Caco-2 (cell line): ENCODE measurements at regions of chr2 and their contacts with region 1.

Region 1: GRCh38 chr2:62505750-62506420 is at the start of gene TMEM17:
- DNase-seq: peak; percentile 95 to 98
- H3K4me3 ChIP-seq: peak within 1 kb of the TSS; percentile 51
- H3K4me3 Mint-ChIP-seq: peak within 1 kb of the TSS; percentile 83
- H3K27ac Mint-ChIP-seq: peak within 1 kb of the TSS; percentile 87
- H3K4me1 ChIP-seq: no peaks in the 10 kb centered on the region
- H3K4me1 Mint-ChIP-seq: peaks cover 15% of the 10 kb centered on the region
- H3K27me3 ChIP-seq: no peaks in the 10 kb centered on the region
- H3K27me3 Mint-ChIP-seq: no peaks in the 10 kb centered on the region
- CTCF ChIP-seq: no peak
- total RNA-seq, gene TMEM17: 2.6 and 3.3 TPM in 2 replicates

Region 2: DNA sequence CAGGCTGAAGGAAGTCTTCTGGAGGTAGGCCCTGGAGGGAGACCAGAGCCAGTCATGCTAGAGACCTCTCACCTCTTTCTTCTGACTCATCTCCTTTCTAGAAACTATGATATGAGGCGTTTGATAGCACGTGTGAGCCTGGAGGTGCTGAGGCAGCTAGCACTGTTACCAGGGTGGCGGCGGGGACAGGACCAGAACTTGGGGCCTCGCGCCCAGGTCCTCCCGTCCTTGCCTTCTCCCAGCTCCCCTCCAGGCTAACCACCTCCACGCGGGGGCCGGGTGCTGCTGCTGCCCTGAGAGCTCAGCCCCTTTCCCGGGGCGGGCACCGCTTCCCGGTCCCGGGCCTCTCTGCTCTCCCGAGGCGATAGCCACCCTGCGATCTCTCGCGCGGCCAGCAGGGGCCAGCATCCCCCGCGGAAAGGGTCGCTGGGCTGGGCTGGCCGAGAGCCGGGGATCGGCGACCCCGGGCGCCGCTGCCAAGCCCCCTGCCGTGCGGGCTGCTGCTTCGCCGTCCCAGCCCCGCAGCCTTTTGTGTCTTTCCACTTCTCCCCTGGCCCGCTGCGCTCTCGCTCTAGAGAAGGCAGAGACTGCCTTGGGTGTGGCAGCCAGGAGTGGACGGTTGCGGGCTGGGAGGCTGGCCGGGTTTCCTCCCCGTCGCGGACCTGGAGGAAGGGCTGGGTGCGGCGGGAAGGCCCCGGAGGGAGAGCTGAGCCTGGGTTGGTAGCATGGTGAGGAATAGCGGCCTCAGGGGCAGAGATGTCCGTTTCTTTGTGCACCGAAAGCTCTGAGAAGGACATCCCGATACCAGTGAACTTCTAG is 49.0 kb before region 1 on chr2:
- CTCF ChIA-PET with region 1: interaction called, 4 read pairs
- POLR2A ChIA-PET with region 1: no interaction called
- intact Hi-C with region 1: loop called (anchors 1 kb)
- DNase-seq: peak; percentile 82 to 95
- H3K4me3 ChIP-seq: peak overlapping the region; percentile 68
- H3K4me3 Mint-ChIP-seq: peak overlapping the region; percentile 75
- H3K27ac Mint-ChIP-seq: peak overlapping the region; percentile 66
- H3K4me1 ChIP-seq: peaks cover 38% of the 10 kb centered on the region
- H3K4me1 Mint-ChIP-seq: peaks cover 8% of the 10 kb centered on the region
- H3K27me3 ChIP-seq: no peaks in the 10 kb centered on the region
- H3K27me3 Mint-ChIP-seq: no peaks in the 10 kb centered on the region
- CTCF ChIP-seq: peak; percentile 92 to 98

Region 3: DNA sequence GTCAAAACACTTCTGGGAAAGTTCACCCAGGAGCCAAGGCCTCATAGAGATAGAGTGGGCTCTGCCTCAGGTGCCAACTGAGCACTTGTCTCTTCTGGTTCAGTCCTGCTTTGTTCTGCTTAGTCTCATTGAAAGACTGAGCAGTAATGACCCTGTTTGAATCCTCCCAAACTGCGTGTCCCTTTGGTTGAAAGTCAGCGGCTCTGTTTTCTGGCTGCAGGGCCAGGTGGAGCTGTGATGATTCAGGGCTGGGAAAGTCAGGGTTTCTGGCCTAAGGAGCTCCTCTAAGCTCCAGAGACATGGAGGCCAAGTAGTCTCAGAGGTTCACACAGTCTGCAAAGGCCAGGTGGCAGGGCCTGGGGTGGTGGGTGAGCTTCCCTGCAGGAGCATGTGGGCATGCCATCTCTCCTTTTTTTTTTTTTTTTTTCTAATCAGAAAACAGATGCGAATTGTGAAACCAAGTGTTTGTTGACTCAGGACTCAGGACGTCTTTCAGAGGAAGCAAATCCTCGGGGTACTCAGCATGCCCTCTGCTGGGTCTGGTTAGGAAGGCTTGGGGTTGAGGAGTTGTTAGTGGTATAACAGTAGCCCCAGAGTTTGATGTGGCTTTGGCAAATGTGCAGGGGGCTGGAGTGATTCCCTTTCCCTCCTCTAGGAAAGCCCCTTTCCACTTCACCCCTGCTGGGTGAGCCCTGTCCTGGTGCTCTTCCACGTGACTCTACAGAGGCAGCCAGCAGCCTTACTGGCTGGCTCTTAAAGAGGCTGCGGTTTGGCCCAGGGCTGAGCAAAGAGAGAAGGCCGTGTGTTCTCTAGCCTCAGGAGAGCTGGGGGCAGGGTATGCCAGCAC is 38.2 kb before region 1 on chr2:
- CTCF ChIA-PET with region 1: no interaction called
- POLR2A ChIA-PET with region 1: no interaction called
- intact Hi-C with region 1: no loop called
- DNase-seq: no peak
- H3K4me3 ChIP-seq: no peak overlapping the region
- H3K4me3 Mint-ChIP-seq: no peak overlapping the region
- H3K27ac Mint-ChIP-seq: peak overlapping the region; percentile 54
- H3K4me1 ChIP-seq: peaks cover 10% of the 10 kb centered on the region
- H3K4me1 Mint-ChIP-seq: peaks cover 3% of the 10 kb centered on the region
- H3K27me3 ChIP-seq: no peaks in the 10 kb centered on the region
- H3K27me3 Mint-ChIP-seq: no peaks in the 10 kb centered on the region
- CTCF ChIP-seq: no peak

Region 4: DNA sequence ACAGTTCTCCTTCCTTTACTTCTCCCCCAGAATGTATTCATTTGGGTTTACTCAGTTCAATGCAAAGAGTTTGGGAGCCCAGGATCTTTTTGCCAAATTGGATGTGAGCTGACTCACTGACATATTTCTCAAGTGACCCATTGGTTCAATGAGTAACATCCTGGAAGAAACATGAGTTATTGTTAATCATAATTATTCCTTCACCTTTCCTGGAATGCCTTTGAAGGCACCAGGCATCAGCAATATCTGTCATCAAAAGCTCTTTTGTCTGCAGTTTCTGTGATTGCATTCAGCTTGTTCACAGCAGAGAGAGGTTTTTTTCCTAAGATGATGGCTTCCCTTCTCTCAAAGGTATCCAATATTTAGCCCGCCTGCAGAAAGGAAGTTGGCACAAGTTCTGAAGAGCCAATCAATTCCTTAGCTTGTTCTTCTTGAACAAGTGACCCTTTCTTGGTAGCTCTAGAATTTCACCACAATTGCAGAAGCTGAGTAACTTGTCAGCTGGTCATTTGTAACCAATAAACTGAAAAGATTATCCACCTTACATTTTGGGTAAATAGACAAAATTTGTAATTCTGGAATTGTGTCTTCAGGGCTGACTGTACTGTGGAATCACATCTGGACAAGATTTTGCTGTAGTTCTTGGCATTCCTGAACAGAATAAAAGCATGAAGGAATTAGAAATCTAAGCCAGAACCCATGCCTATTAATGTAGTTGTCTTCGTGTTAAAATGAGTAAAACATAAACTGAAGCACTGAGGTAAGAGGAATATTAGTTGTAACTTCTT is 72.3 kb after region 1 on chr2:
- CTCF ChIA-PET with region 1: no interaction called
- POLR2A ChIA-PET with region 1: no interaction called
- intact Hi-C with region 1: loop called (anchors 1 kb)
- DNase-seq: peak in 1 of 2 experiments; percentile 50
- H3K4me3 ChIP-seq: no peak overlapping the region
- H3K4me3 Mint-ChIP-seq: peak overlapping the region; percentile 36
- H3K27ac Mint-ChIP-seq: peak overlapping the region; percentile 92
- H3K4me1 ChIP-seq: peaks cover 60% of the 10 kb centered on the region
- H3K4me1 Mint-ChIP-seq: peaks cover 54% of the 10 kb centered on the region
- H3K27me3 ChIP-seq: no peaks in the 10 kb centered on the region
- H3K27me3 Mint-ChIP-seq: no peaks in the 10 kb centered on the region
- CTCF ChIP-seq: no peak

Region 5: DNA sequence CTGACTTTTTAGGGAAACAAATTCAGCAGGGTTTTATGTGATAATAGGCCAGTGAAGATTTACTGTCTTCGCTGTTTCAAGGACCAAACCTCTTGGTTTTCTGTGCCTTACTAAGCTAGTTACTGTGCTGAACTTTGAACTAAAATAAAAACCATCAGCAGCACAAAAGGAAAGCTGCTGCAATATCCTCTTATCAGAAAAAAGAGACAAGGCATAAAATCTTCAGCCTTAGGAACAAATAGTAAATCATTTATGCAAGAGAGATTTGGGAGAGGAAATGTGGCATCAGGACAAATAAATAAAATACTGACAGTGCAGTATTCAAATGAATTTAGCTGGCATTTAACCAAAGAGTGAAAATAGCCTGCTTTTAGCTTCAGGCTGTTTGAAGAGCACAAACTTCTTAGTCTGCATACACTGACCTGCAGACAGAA is 135.5 kb after region 1 on chr2:
- CTCF ChIA-PET with region 1: interaction called, 4 read pairs
- POLR2A ChIA-PET with region 1: no interaction called
- intact Hi-C with region 1: loop called (anchors 5 kb)
- DNase-seq: no peak
- H3K4me3 ChIP-seq: no peak overlapping the region
- H3K4me3 Mint-ChIP-seq: peak overlapping the region; percentile 15
- H3K27ac Mint-ChIP-seq: peak overlapping the region; percentile 23
- H3K4me1 ChIP-seq: peaks cover 31% of the 10 kb centered on the region
- H3K4me1 Mint-ChIP-seq: peaks cover 22% of the 10 kb centered on the region
- H3K27me3 ChIP-seq: no peaks in the 10 kb centered on the region
- H3K27me3 Mint-ChIP-seq: no peaks in the 10 kb centered on the region
- CTCF ChIP-seq: no peak

Region 6: DNA sequence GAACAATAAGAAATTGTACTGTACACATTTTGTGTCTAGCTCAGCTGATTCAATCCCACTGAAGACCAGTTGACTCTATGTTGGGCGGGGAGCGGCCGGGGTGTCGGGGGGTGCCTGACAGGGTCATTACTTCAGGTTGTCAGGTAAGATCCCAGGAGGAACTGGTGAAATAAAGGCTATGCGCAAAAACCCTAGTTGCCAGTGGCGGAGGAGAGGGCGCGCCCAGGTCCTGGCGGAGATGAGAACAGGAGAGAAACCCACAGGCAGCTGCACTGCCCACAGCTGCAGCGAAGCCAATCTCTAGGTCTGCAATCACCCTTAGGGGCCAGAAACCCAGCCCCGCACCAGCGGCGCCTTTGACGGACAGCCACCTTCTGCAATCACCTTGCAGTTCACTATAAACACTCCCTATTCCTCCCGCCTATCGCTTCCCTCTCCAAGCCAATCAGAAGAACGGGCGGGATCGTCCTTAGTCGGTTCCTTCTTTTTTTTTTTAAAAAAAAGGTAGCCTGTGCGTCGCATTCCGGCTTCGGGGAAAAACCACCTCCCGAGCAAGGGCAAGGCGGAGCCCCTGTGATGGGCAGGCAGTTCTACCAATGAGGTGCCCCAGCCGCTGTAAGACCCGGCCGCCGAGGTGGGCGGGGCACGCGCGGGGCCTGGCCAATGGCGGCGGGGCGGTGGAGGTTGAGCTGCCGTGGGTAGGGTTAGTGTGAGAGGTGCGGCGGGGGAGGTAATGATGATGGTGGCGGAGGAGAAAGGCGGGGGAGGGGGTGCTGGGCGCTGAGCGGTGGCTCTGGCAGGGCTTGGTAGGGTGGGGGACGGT is 199.3 kb after region 1 on chr2 and contains the start of gene EHBP1:
- CTCF ChIA-PET with region 1: no interaction called
- POLR2A ChIA-PET with region 1: interaction called, 17 read pairs
- intact Hi-C with region 1: loop called (anchors 1 kb)
- DNase-seq: peak; percentile 100
- H3K4me3 ChIP-seq: peak within 1 kb of the TSS; percentile 86
- H3K4me3 Mint-ChIP-seq: peak within 1 kb of the TSS; percentile 91
- H3K27ac Mint-ChIP-seq: peak within 1 kb of the TSS; percentile 87
- H3K4me1 ChIP-seq: peaks cover 34% of the 10 kb centered on the region
- H3K4me1 Mint-ChIP-seq: peaks cover 29% of the 10 kb centered on the region
- H3K27me3 ChIP-seq: no peaks in the 10 kb centered on the region
- H3K27me3 Mint-ChIP-seq: no peaks in the 10 kb centered on the region
- CTCF ChIP-seq: no peak
- total RNA-seq, gene EHBP1: 120 and 123 TPM in 2 replicates

Region 7: GRCh38 chr2:62801814-62802523 is 296.1 kb after region 1 on chr2:
- CTCF ChIA-PET with region 1: no interaction called
- POLR2A ChIA-PET with region 1: no interaction called
- intact Hi-C with region 1: no loop called
- DNase-seq: peak in 1 of 2 experiments; percentile 16
- H3K4me3 ChIP-seq: no peak overlapping the region
- H3K4me3 Mint-ChIP-seq: no peak overlapping the region
- H3K27ac Mint-ChIP-seq: no peak overlapping the region
- H3K4me1 ChIP-seq: no peaks in the 10 kb centered on the region
- H3K4me1 Mint-ChIP-seq: no peaks in the 10 kb centered on the region
- H3K27me3 ChIP-seq: no peaks in the 10 kb centered on the region
- H3K27me3 Mint-ChIP-seq: no peaks in the 10 kb centered on the region
- CTCF ChIP-seq: no peak